ENCODE measurements at regions of chr16 and their contacts with region 1.

Region 1: DNA sequence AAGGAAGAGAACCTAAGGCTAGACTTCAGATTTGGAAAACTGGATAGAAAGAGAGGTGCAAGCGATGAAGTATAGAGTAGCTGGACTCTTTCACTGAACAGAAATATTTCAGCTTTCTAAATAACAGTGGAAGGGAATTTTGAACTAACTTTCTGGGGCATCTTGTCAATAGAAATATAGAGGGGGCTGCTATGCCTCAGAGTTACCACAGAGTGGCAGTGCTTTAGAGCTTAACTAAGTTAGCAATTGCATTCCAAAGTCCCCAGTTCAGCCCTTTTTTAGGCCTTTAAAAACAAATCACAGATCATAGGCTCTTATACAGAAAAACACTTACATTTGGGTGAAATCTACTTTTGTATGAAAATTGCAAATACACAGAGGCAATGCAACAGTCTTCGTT is 154.2 kb upstream of the CDH8 start:
- DNase-seq: peak in 1 of 10 donors; percentile 14
- H3K4me3 ChIP-seq: no peak overlapping the region
- H3K27ac ChIP-seq: no peak overlapping the region
- H3K27me3 ChIP-seq: no peaks in the 10 kb centered on the region
- CTCF ChIP-seq: peak; percentile 42 to 81 (median 67)

Region 2: GRCh38 chr16:62167551-62167950 is 22.9 kb before region 1 on chr16:
- intact Hi-C with region 1: no loop called
- DNase-seq: no peak
- H3K4me3 ChIP-seq: no peak overlapping the region
- H3K27ac ChIP-seq: no peak overlapping the region
- H3K27me3 ChIP-seq: no peaks in the 10 kb centered on the region
- CTCF ChIP-seq: no peak

Region 3: GRCh38 chr16:62870554-62870953 is 680.1 kb after region 1 on chr16:
- intact Hi-C with region 1: loop called in 1 of 2 experiments (anchors 10 kb)
- DNase-seq: no peak
- H3K4me3 ChIP-seq: no peak overlapping the region
- H3K27ac ChIP-seq: no peak overlapping the region
- H3K27me3 ChIP-seq: no peaks in the 10 kb centered on the region
- CTCF ChIP-seq: peak in 54 of 56 donors; percentile 20 to 80 (median 47)